ENCODE measurements at regions of chr16 and their contacts with region 1.

Region 1: DNA sequence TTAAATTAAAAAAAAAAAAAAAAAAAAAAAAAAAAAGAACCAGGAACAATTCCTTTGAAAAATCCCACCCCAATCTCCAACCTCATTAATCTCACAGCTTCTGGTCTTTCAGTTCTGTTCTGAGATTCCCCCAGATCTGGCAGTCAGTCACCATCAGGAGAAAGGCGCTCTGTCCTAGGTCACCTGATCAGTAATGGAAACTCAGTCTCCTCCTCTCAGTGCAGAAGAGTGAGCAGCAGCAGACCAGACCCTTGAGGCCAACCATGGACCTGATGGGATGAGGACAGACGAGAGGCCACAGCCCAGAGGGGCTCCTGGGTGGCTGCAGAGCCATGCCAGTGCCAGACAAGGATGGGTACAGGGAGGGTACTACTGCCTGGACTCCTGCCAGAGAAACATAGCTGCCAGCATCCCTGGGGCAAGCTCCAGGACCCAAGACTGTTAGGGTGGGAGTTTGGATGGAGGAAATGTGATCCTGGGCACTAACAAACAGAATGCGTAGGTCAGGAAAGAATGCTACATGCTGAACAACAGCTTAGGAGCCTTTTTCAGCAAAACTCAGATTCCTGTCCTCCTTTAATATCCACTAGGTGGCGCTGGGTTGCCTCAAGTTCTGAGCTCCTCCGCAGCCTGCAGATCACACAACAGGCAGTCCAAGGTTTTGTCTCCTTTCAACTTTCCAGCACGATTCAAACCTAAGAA is 28.7 kb downstream of the MPG start:
- DNase-seq: peak; percentile 33 to 70 (median 57)
- H3K4me3 ChIP-seq: no peak overlapping the region
- H3K4me3 Mint-ChIP-seq: no peak overlapping the region
- H3K27ac ChIP-seq: no peak overlapping the region
- H3K27ac Mint-ChIP-seq: no peak overlapping the region
- H3K4me1 ChIP-seq: no peaks in the 10 kb centered on the region
- H3K4me1 Mint-ChIP-seq: peaks cover 4 to 5% (median 5%) of the 10 kb centered on the region in 3 donors
- H3K27me3 ChIP-seq: no peaks in the 10 kb centered on the region
- H3K27me3 Mint-ChIP-seq: no peaks in the 10 kb centered on the region

Region 2: DNA sequence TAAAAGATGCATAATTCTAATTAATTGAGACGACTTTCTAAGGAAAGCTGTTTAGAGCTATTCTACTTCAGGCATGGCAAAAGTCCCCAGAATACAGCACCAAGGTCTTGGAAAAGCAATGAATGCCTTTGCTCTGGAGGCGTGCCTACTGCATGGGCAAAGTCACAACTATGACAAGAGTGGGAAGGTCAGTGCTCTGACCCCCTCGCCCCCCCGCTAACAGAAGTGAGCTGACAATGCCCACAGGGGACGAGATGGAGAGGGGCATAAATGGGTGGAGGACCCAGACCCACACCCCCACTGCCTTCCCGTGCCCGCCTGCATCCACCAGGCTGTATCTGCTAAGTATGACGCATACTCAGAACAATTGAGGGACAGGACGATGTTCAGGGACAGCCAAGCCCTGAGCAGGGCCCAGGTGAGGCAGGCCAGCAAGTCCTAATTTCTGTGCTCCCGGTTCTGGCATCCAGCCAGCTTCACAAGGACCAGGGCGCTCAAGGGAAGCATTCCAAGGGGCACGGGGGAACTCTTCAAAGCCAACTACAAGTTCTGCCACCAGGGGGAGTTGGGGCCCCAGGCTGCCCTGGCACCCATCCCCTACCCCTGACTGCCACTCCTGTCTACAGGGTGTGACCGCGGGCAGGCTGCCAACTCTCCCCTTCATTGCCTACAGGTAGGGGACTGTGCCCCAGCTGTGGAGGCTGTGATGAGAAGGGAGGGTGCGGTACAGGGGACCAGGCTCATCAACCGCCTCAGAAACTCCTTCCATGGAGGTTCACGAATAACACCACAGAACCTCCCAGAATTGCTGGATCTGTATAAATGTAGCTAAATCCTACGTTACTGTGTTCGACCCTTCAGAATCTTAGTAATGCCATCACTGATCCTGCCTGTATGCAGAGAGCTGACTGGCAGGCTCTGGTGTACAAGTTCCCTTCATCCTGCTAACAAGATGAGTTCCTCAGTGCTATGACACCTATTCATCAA is 10.9 kb after region 1 on chr16:
- CTCF ChIA-PET with region 1: interaction called, 17 read pairs
- POLR2A ChIA-PET with region 1: no interaction called
- DNase-seq: peak; percentile 52 to 73 (median 59)
- H3K4me3 ChIP-seq: no peak overlapping the region
- H3K4me3 Mint-ChIP-seq: no peak overlapping the region
- H3K27ac ChIP-seq: no peak overlapping the region
- H3K27ac Mint-ChIP-seq: peak overlapping the region in 2 of 8 donors; percentile 17 to 54
- H3K4me1 ChIP-seq: no peaks in the 10 kb centered on the region
- H3K4me1 Mint-ChIP-seq: peaks cover under 1 to 13% (median 8%) of the 10 kb centered on the region in 3 donors
- H3K27me3 ChIP-seq: no peaks in the 10 kb centered on the region
- H3K27me3 Mint-ChIP-seq: no peaks in the 10 kb centered on the region

Region 3: GRCh38 chr16:234468-235305 is 127.9 kb after region 1 on chr16 and contains the start of gene FAM234A:
- CTCF ChIA-PET with region 1: no interaction called
- POLR2A ChIA-PET with region 1: no interaction called
- DNase-seq: peak; percentile 92 to 97 (median 95)
- H3K4me3 ChIP-seq: peak within 1 kb of the TSS; percentile 74
- H3K4me3 Mint-ChIP-seq: peak within 1 kb of the TSS; percentile 93 to 98 (median 96)
- H3K27ac ChIP-seq: peak within 1 kb of the TSS; percentile 94
- H3K27ac Mint-ChIP-seq: peak within 1 kb of the TSS; percentile 99 to 100 (median 99)
- H3K4me1 ChIP-seq: peaks cover 5% of the 10 kb centered on the region
- H3K4me1 Mint-ChIP-seq: peaks cover 14 to 24% (median 18%) of the 10 kb centered on the region in 3 donors
- H3K27me3 ChIP-seq: no peaks in the 10 kb centered on the region
- H3K27me3 Mint-ChIP-seq: no peaks in the 10 kb centered on the region
- total RNA-seq, gene FAM234A: 23.1 to 26.1 TPM

Region 4: DNA sequence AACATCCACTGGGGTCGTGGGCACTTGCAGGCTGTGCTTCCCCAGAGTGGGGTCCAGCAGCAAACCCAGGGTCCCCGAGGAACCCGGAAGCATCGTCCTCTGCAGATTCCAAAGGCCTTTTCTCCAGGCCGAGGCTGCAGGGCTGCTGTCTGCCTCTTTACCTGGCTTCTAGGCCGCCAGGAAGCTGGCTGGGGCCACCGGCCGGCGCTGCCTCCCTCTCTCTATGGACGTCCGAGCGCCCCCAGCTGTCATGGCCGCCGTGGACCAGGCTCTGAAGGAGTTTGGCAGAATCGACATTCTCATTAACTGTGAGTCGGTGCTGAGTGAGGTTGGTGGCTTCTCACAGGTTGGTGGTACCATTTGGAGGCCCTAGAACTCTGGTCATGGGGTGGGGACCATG is 300.5 kb after region 1 on chr16:
- CTCF ChIA-PET with region 1: no interaction called
- POLR2A ChIA-PET with region 1: no interaction called
- DNase-seq: no peak
- H3K4me3 ChIP-seq: no peak overlapping the region
- H3K4me3 Mint-ChIP-seq: no peak overlapping the region
- H3K27ac ChIP-seq: no peak overlapping the region
- H3K27ac Mint-ChIP-seq: no peak overlapping the region
- H3K4me1 ChIP-seq: peaks cover 1% of the 10 kb centered on the region
- H3K4me1 Mint-ChIP-seq: no peaks in the 10 kb centered on the region
- H3K27me3 ChIP-seq: no peaks in the 10 kb centered on the region
- H3K27me3 Mint-ChIP-seq: no peaks in the 10 kb centered on the region

Measured in CD8-positive, alpha-beta memory T cell (primary cell).